CD8-positive, alpha-beta T cell (primary cell): ENCODE measurements at regions of chr15 and their contacts with region 1.

Region 1: GRCh38 chr15:37537802-37538201 is 396.6 kb upstream of the TMCO5A start:
- DNase-seq: no peak
- ATAC-seq: no peak
- H3K4me3 ChIP-seq: no peak overlapping the region
- H3K4me3 Mint-ChIP-seq: no peak overlapping the region
- H3K27ac ChIP-seq: no peak overlapping the region
- H3K27ac Mint-ChIP-seq: no peak overlapping the region
- H3K4me1 ChIP-seq: no peaks in the 10 kb centered on the region
- H3K4me1 Mint-ChIP-seq: no peaks in the 10 kb centered on the region
- H3K27me3 ChIP-seq: no peaks in the 10 kb centered on the region
- H3K27me3 Mint-ChIP-seq: no peaks in the 10 kb centered on the region
- CTCF ChIP-seq: no peak

Region 2: GRCh38 chr15:37503557-37503956 is 34.2 kb before region 1 on chr15:
- CTCF ChIA-PET with region 1: no interaction called
- POLR2A ChIA-PET with region 1: no interaction called
- intact Hi-C with region 1: loop called in 1 of 2 experiments (anchors 1 kb)
- DNase-seq: no peak
- ATAC-seq: no peak
- H3K4me3 ChIP-seq: no peak overlapping the region
- H3K4me3 Mint-ChIP-seq: no peak overlapping the region
- H3K27ac ChIP-seq: no peak overlapping the region
- H3K27ac Mint-ChIP-seq: no peak overlapping the region
- H3K4me1 ChIP-seq: no peaks in the 10 kb centered on the region
- H3K4me1 Mint-ChIP-seq: no peaks in the 10 kb centered on the region
- H3K27me3 ChIP-seq: no peaks in the 10 kb centered on the region
- H3K27me3 Mint-ChIP-seq: no peaks in the 10 kb centered on the region
- CTCF ChIP-seq: no peak

Region 3: DNA sequence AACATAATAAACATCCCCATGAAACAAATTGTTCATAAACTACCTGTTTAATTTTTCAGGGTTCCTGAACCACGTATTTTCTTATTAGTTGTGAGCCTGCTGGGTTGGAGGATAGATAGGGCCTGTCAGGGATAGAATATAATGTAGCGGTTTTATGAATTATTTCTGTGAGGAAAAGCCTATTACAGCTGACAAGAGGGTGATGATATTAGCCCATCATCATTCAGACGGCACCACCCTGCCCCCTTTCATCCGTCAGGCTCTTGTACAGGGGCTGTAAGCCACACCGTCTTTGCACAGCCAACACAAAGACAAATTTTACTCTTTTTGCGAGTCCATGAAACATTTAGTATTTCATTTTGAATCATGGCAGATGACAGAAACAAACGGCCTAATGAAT is 61.4 kb after region 1 on chr15:
- CTCF ChIA-PET with region 1: no interaction called
- POLR2A ChIA-PET with region 1: no interaction called
- intact Hi-C with region 1: no loop called
- DNase-seq: no peak
- ATAC-seq: no peak
- H3K4me3 ChIP-seq: no peak overlapping the region
- H3K4me3 Mint-ChIP-seq: no peak overlapping the region
- H3K27ac ChIP-seq: no peak overlapping the region
- H3K27ac Mint-ChIP-seq: no peak overlapping the region
- H3K4me1 ChIP-seq: no peaks in the 10 kb centered on the region
- H3K4me1 Mint-ChIP-seq: no peaks in the 10 kb centered on the region
- H3K27me3 ChIP-seq: no peaks in the 10 kb centered on the region
- H3K27me3 Mint-ChIP-seq: no peaks in the 10 kb centered on the region
- CTCF ChIP-seq: no peak